BJ (cell line): ENCODE measurements at regions of chr10 and their contacts with region 1.

Region 1: GRCh38 chr10:119207367-119207668 is at the start of gene GRK5:
- DNase-seq: peak; percentile 91
- H3K4me3 ChIP-seq: peak within 1 kb of the TSS; percentile 91
- H3K27me3 ChIP-seq: no peaks in the 10 kb centered on the region
- CTCF ChIP-seq: no peak
- polyA plus RNA-seq, gene GRK5: 14.7 and 20.8 TPM in 2 replicates

Region 2: DNA sequence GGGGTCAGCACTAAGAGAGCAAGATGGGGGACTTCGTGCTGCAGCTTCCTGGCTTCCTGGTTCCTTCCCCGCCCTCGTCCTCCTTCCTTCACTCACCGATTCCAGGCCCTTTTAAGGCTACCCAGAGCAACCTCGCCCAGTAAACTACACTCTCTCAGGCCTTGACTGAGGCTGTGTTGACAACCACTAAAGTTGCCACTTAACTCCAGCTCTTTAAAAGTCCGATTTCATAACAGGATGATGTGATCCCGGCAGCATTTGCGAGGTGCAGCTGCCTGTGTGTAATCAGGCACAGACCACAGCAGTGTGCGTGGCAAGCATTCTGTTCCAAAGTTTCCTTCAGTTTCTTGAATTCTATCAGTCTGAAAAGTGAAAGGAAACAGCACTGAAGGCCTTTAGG is 1271.2 kb before region 1 on chr10:
- CTCF ChIA-PET with region 1: no interaction called
- POLR2A ChIA-PET with region 1: interaction called, 32 read pairs
- DNase-seq: peak; percentile 48
- H3K4me3 ChIP-seq: no peak overlapping the region
- H3K27me3 ChIP-seq: peaks cover 1% of the 10 kb centered on the region; the same call in 1 of the 2 replicates
- CTCF ChIP-seq: no peak

Region 3: DNA sequence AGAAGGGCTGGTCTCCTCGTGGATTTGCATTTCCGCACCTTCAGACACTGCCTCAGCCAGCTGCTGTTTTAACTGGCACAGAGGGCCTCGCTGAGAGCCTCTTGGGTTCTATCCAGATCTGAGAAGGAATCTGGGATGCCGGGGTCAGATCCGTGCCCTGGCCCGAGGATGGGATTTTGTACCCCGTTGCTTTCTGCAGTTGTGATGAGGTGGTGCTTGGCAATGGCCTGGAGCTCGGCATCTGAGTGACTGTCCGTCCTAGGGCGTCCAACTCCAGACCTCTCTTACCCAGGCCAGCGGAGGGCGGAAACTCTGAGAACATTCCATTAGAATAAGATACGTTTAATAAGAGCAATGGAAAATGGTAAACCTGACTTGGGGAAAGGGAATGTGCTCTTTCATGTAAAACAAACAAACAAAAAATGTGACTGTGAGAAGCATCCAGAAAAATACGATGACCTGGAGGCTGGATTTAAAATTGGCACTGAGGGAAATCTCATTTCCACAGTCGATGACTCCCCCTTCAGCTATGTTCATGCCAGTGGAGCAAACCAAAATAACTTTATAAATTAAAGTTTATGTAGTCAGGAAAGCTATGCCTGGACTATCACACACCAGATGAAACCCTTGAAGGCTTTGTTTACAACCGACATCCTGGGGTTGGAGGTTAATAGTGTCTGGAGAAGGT is 39.7 kb after region 1 on chr10:
- CTCF ChIA-PET with region 1: interaction called, 42 read pairs
- POLR2A ChIA-PET with region 1: no interaction called
- DNase-seq: peak; percentile 97
- H3K4me3 ChIP-seq: no peak overlapping the region
- H3K27me3 ChIP-seq: no peaks in the 10 kb centered on the region
- CTCF ChIP-seq: peak; percentile 17; the same call in 1 of the 2 replicates

Region 4: GRCh38 chr10:119364645-119365605 is 157.6 kb after region 1 on chr10:
- CTCF ChIA-PET with region 1: interaction called, 13 read pairs
- POLR2A ChIA-PET with region 1: no interaction called
- DNase-seq: no peak
- H3K4me3 ChIP-seq: no peak overlapping the region
- H3K27me3 ChIP-seq: no peaks in the 10 kb centered on the region
- CTCF ChIP-seq: peak; percentile 27

Region 5: GRCh38 chr10:119421887-119422681 is 214.8 kb after region 1 on chr10:
- CTCF ChIA-PET with region 1: interaction called, 16 read pairs
- POLR2A ChIA-PET with region 1: no interaction called
- DNase-seq: no peak
- H3K4me3 ChIP-seq: no peak overlapping the region
- H3K27me3 ChIP-seq: no peaks in the 10 kb centered on the region
- CTCF ChIP-seq: no peak

Region 6: GRCh38 chr10:119542988-119543813 is 335.9 kb after region 1 on chr10:
- CTCF ChIA-PET with region 1: interaction called, 14 read pairs
- POLR2A ChIA-PET with region 1: interaction called, 3 read pairs
- DNase-seq: no peak
- H3K4me3 ChIP-seq: peak overlapping the region; percentile 77
- H3K27me3 ChIP-seq: peaks cover under 1% of the 10 kb centered on the region
- CTCF ChIP-seq: peak; percentile 62